ENCODE measurements at regions of chr2 and their contacts with region 1.

Region 1: GRCh38 chr2:128321784-128322714 is 3.4 kb upstream of the HS6ST1 start:
- DNase-seq: peak; percentile 87
- ATAC-seq: peak; percentile 56
- H3K4me3 Mint-ChIP-seq: peak overlapping the region; percentile 78
- H3K27ac Mint-ChIP-seq: peak overlapping the region; percentile 12
- H3K4me1 Mint-ChIP-seq: peaks cover 12% of the 10 kb centered on the region
- H3K27me3 Mint-ChIP-seq: no peaks in the 10 kb centered on the region
- CTCF ChIP-seq: no peak

Region 2: GRCh38 chr2:126657636-126658318 is 1664.3 kb before region 1 on chr2:
- CTCF ChIA-PET with region 1: no interaction called
- POLR2A ChIA-PET with region 1: no interaction called
- intact Hi-C with region 1: loop called (anchors 2 kb)
- DNase-seq: peak; percentile 40
- ATAC-seq: peak; percentile 69
- H3K4me3 Mint-ChIP-seq: peak overlapping the region; percentile 94
- H3K27ac Mint-ChIP-seq: peak overlapping the region; percentile 94
- H3K4me1 Mint-ChIP-seq: peaks cover 68% of the 10 kb centered on the region
- H3K27me3 Mint-ChIP-seq: no peaks in the 10 kb centered on the region
- CTCF ChIP-seq: no peak

Region 3: GRCh38 chr2:128090945-128091725 is 230.9 kb before region 1 on chr2 and contains the start of gene UGGT1:
- CTCF ChIA-PET with region 1: no interaction called
- POLR2A ChIA-PET with region 1: interaction called, 3 read pairs
- intact Hi-C with region 1: loop called (anchors 5 kb)
- DNase-seq: peak; percentile 83
- ATAC-seq: peak; percentile 96
- H3K4me3 Mint-ChIP-seq: peak within 1 kb of the TSS; percentile 88
- H3K27ac Mint-ChIP-seq: peak within 1 kb of the TSS; percentile 93
- H3K4me1 Mint-ChIP-seq: peaks cover 41% of the 10 kb centered on the region
- H3K27me3 Mint-ChIP-seq: no peaks in the 10 kb centered on the region
- CTCF ChIP-seq: no peak
- total RNA-seq, gene UGGT1: 43.7 and 46.8 TPM in 2 replicates

Region 4: DNA sequence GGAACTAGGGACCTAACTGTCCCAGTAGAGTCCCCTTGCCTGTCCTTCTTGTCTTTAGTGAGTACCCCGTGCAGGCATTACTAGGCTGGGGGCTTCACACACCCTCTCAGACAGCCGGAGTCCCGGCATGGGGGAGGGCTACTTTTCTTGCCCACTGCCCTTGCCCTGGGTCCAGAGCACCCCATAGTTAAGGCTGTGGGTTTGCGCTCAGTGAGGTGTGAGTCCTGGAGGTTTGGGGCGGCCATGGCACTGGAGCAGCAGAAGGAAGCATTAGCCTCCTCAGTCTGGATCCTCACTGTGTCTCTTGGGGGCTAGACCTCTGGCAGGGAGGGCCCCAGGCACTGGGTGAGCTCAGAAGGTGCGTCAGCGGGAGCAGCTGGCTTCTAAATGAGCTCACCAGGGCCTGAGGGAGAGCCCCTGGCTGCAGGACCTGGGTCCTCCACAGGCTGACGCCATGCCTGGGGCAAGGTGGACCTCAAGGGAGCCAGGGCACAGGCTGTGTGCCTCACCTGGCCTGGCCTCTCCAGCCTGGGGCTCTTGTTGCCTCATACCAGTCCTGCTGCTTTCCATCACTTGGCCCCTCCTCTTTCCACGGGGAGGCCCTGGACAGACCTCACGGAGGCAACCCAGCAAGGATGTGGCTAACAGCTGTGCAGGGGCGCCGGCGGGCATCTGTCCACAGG is 30.7 kb before region 1 on chr2:
- CTCF ChIA-PET with region 1: no interaction called
- POLR2A ChIA-PET with region 1: no interaction called
- intact Hi-C with region 1: loop called (anchors 1 kb)
- DNase-seq: no peak
- ATAC-seq: peak; percentile 95
- H3K4me3 Mint-ChIP-seq: no peak overlapping the region
- H3K27ac Mint-ChIP-seq: no peak overlapping the region
- H3K4me1 Mint-ChIP-seq: peaks cover 28% of the 10 kb centered on the region
- H3K27me3 Mint-ChIP-seq: no peaks in the 10 kb centered on the region
- CTCF ChIP-seq: no peak

Region 5: GRCh38 chr2:128736689-128737545 is 414.9 kb after region 1 on chr2:
- CTCF ChIA-PET with region 1: no interaction called
- POLR2A ChIA-PET with region 1: no interaction called
- intact Hi-C with region 1: loop called (anchors 1 kb)
- DNase-seq: peak; percentile 66
- ATAC-seq: peak; percentile 72
- H3K4me3 Mint-ChIP-seq: peak overlapping the region; percentile 76
- H3K27ac Mint-ChIP-seq: no peak overlapping the region
- H3K4me1 Mint-ChIP-seq: peaks cover 18% of the 10 kb centered on the region
- H3K27me3 Mint-ChIP-seq: peaks cover 7% of the 10 kb centered on the region
- CTCF ChIP-seq: peak; percentile 66

Region 6: GRCh38 chr2:129877289-129877779 is 1555.3 kb after region 1 on chr2:
- CTCF ChIA-PET with region 1: no interaction called
- POLR2A ChIA-PET with region 1: no interaction called
- intact Hi-C with region 1: loop called (anchors 2 kb)
- DNase-seq: peak; percentile 71
- ATAC-seq: peak; percentile 94
- H3K4me3 Mint-ChIP-seq: peak overlapping the region; percentile 96
- H3K27ac Mint-ChIP-seq: peak overlapping the region; percentile 86
- H3K4me1 Mint-ChIP-seq: peaks cover 13% of the 10 kb centered on the region
- H3K27me3 Mint-ChIP-seq: peaks cover 2% of the 10 kb centered on the region
- CTCF ChIP-seq: no peak

Measured in activated B cell treated with CpG ODN at 0.5 μM for 24 hours (primary cell).